ENCODE measurements at regions of chr10 and their contacts with region 1.

Region 1: GRCh38 chr10:23438550-23439441 is at the start of gene OTUD1:
- DNase-seq: peak; percentile 94
- H3K4me3 Mint-ChIP-seq: peak within 1 kb of the TSS; percentile 83
- H3K27ac Mint-ChIP-seq: peak within 1 kb of the TSS; percentile 84
- H3K4me1 Mint-ChIP-seq: peaks cover 47% of the 10 kb centered on the region
- H3K27me3 Mint-ChIP-seq: peaks cover 5% of the 10 kb centered on the region
- total RNA-seq, gene OTUD1: 19.1 and 20.3 TPM in 2 replicates

Region 2: GRCh38 chr10:23095404-23095965 is 343.3 kb before region 1 on chr10 and contains the start of gene MSRB2:
- intact Hi-C with region 1: loop called (anchors 5 kb)
- DNase-seq: peak; percentile 64
- H3K4me3 Mint-ChIP-seq: peak within 1 kb of the TSS; percentile 92
- H3K27ac Mint-ChIP-seq: peak within 1 kb of the TSS; percentile 91
- H3K4me1 Mint-ChIP-seq: peaks cover 36% of the 10 kb centered on the region
- H3K27me3 Mint-ChIP-seq: peaks cover 6% of the 10 kb centered on the region
- total RNA-seq, gene MSRB2: 3.0 and 4.0 TPM in 2 replicates

Region 3: DNA sequence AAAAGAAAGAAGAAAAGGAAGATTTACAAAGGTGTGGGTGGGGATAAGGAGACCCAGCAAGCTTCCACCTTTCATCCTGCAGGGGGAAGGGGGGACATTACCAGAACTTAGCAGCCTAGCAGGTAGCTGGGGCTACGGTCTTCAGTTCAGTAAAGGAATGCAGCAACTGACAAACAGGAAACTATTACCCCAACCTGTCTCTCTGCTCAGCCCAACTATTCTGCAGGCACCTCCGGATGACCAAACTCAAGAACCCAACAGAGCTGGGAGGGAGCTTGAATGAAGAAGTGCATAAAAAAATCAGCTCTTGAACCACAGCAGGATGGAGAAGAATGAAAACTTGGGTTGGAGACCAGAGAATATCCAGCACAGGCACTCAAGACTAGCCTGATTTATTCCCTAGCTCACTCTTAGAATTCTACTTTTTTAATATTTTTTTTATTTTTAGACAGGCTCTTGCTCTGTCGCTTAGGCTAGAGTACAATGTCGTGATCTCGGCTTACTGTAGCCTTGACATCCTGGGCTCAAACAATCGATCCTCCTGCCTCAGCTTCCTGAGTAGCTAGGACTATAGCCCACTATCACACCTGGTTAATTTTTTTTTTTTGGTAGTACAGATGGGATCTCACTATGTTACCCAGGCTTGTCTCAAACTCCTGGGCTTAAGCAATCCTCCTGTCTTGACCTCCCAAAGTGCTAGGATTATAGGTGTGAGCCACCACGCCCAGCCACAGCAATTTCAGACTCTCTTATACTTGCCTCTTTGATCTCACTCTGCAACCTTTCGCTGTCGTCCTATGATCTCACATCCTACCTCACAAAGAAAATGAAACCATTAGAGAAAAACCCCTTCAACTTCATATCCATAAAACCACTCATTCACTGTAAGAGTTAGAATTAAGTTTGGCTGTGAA is 75.7 kb before region 1 on chr10:
- intact Hi-C with region 1: loop called (anchors 1 kb)
- DNase-seq: peak; percentile 55
- H3K4me3 Mint-ChIP-seq: peak overlapping the region; percentile 78
- H3K27ac Mint-ChIP-seq: peak overlapping the region; percentile 93
- H3K4me1 Mint-ChIP-seq: peaks cover 54% of the 10 kb centered on the region
- H3K27me3 Mint-ChIP-seq: no peaks in the 10 kb centered on the region

Region 4: GRCh38 chr10:23412223-23412622 is 26.6 kb before region 1 on chr10:
- intact Hi-C with region 1: loop called (anchors 1 kb)
- DNase-seq: no peak
- H3K4me3 Mint-ChIP-seq: no peak overlapping the region
- H3K27ac Mint-ChIP-seq: peak overlapping the region; percentile 80
- H3K4me1 Mint-ChIP-seq: peaks cover 22% of the 10 kb centered on the region
- H3K27me3 Mint-ChIP-seq: no peaks in the 10 kb centered on the region

Region 5: DNA sequence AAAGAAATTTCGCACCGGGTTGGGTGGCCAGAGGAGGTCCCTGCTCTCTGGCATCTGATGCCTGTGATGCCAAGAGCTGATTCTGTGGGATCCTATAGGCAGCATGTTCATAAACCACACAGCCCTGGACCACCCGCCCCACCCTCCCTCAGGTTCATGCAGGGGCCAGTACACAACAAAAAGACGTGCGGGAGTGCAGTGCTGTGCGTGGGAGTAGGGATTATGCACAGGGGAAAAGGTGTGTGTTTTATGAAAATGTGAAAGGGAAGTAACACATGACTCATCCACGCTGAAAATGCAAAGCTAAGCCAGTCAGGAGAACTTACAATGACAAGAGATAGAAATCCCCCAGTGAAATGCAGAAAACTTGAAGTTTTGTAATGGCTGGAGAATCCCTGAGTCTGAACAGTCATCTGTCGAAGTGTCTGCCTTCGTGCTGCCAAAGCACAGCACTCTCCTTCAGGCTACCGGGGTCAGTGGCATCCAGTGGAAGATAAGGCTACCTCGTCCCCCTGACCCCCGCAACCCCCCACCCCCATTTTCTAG is 771.2 kb after region 1 on chr10:
- intact Hi-C with region 1: loop called (anchors 10 kb)
- DNase-seq: peak; percentile 8
- H3K4me3 Mint-ChIP-seq: peak overlapping the region; percentile 83
- H3K27ac Mint-ChIP-seq: peak overlapping the region; percentile 90
- H3K4me1 Mint-ChIP-seq: peaks cover 39% of the 10 kb centered on the region
- H3K27me3 Mint-ChIP-seq: peaks cover 24% of the 10 kb centered on the region